BJ (cell line): ENCODE measurements at regions of chr2 and their contacts with region 1.

Region 1: GRCh38 chr2:105521205-105521604 is 122.4 kb upstream of the FHL2 start:
- DNase-seq: no peak
- H3K4me3 ChIP-seq: no peak overlapping the region
- H3K27me3 ChIP-seq: no peaks in the 10 kb centered on the region; the same call in 1 of the 2 replicates
- CTCF ChIP-seq: peak; percentile 32

Region 2: GRCh38 chr2:105344704-105345345 is 176.4 kb before region 1 on chr2:
- CTCF ChIA-PET with region 1: interaction called, 30 read pairs
- POLR2A ChIA-PET with region 1: no interaction called
- DNase-seq: no peak
- H3K4me3 ChIP-seq: no peak overlapping the region
- H3K27me3 ChIP-seq: no peaks in the 10 kb centered on the region
- CTCF ChIP-seq: peak; percentile 41

Region 3: DNA sequence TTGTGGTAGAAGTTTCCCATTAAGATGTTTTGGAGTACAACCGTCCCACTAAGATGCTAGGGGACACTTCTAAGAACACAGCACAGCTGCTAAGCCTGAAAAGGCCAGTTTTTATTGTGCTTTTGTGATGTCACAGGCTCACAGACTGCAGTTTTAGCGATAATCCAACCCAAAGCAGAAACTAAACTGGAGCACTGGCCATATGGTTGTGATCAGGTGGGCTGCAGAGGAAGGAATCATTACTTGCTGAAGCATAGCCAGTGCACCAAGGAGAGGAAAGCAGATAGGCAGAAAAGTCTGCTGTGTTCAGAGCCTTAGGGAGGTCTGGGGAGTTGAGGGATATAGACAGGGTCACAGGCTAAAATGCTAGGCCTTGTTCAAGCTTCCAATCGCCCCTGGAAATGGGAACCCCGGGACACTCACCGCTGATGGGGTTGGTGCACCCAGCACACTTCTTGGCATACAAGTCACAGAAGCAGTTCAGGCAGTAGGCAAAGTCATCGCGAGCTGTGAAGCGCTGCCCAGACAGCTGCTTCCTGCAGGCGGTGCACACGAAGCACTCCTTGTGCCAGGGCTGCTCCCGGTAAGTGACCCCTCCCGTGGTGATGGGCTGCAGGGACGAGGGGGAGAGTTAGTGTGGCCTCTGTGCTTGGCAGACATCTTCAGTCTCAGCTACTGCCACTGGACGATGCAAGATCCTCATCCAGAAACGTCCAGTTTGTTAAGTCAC is 158.2 kb before region 1 on chr2:
- CTCF ChIA-PET with region 1: interaction called, 33 read pairs
- POLR2A ChIA-PET with region 1: no interaction called
- DNase-seq: no peak
- H3K4me3 ChIP-seq: no peak overlapping the region
- H3K27me3 ChIP-seq: no peaks in the 10 kb centered on the region
- CTCF ChIP-seq: no peak

Region 4: GRCh38 chr2:105369747-105370690 is 151.2 kb before region 1 on chr2:
- CTCF ChIA-PET with region 1: interaction called, 33 read pairs
- POLR2A ChIA-PET with region 1: no interaction called
- DNase-seq: no peak
- H3K4me3 ChIP-seq: no peak overlapping the region
- H3K27me3 ChIP-seq: no peaks in the 10 kb centered on the region
- CTCF ChIP-seq: peak; percentile 88

Region 5: DNA sequence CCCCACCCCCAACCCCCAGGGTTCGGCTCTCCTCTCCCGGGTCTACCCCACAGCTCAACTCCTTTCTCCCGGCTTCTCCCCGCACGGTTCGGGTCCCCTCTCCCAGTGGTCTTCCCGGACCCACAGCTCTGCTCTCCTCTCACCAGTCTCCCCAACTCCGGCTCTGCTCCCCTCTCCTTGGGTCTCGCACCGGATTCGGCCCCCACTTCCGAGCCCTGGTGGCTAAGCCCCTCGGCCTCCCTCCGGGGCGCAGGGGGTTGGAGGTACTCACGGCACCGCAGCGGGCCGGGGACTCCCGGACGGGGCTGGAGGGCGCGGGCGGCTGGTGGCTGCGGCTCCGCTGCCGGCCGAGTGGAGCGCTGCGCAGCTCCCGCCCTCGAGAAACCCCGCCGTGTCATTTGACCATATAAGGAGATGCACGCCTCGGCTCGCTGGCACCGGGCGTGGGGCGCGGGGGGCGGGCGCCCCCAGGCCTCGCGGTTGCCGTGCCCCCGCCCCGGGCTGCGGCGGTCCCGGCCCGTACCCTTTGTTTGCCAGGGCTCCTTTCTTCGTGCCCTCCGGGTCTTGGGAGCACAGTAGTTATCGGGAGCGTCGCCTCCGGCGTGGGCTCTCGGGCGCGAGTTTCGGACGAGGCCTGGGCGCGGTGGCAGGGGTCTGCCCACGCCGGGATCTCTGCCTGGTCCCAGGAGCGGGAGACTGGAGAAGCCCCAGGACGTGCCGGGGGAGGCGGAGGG is 122.3 kb before region 1 on chr2 and contains the start of gene FHL2:
- CTCF ChIA-PET with region 1: interaction called, 16 read pairs
- POLR2A ChIA-PET with region 1: no interaction called
- DNase-seq: no peak
- H3K4me3 ChIP-seq: peak within 1 kb of the TSS; percentile 100
- H3K27me3 ChIP-seq: no peaks in the 10 kb centered on the region
- CTCF ChIP-seq: peak; percentile 37
- polyA plus RNA-seq, gene FHL2: 472 and 546 TPM in 2 replicates

Region 6: GRCh38 chr2:105403785-105404698 is 117.2 kb before region 1 on chr2:
- CTCF ChIA-PET with region 1: interaction called, 16 read pairs
- POLR2A ChIA-PET with region 1: no interaction called
- DNase-seq: peak; percentile 89
- H3K4me3 ChIP-seq: no peak overlapping the region
- H3K27me3 ChIP-seq: no peaks in the 10 kb centered on the region
- CTCF ChIP-seq: peak; percentile 61

Region 7: DNA sequence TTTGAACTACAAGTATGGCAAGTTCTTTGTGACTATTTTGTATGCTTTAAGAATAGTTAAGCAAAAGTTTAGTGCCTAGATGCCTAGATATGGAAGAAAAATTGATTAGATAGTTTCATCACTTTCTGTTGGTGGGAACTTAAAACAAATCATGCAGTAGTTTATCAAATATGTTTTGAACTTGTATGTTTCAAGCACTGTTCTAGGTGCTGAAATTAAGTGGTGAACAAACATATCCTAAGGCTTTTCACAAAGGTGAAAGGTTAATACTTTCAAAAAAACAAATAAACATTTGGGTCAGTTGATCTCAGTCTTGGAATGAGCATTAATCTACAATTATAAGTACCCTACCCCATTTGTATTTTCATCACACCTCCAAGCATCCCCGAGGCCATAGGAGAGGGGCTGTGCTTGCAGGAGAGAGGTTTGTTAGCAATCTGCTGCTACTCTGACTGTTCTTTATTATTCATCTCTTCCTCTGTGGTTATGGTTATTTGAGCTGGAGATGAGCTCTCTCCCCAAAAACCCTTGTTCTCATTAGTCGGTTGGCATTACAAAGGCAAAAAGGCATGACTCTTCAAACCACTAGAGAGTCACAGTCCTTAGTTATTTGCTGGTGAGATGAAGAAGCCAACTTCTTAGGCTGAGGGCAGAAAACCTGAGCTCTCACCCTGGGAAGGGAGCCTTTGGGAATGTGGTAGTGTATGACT is 18.4 kb before region 1 on chr2:
- CTCF ChIA-PET with region 1: no interaction called
- POLR2A ChIA-PET with region 1: no interaction called
- DNase-seq: no peak
- H3K4me3 ChIP-seq: no peak overlapping the region
- H3K27me3 ChIP-seq: peaks cover 5% of the 10 kb centered on the region
- CTCF ChIP-seq: no peak